ENCODE measurements at regions of chr6 and their contacts with region 1.

Region 1: GRCh38 chr6:75208298-75209183 is 2.7 kb upstream of the COL12A1 start:
- DNase-seq: peak; percentile 91
- H3K4me3 ChIP-seq: peak overlapping the region; percentile 16
- H3K27ac ChIP-seq: no peak overlapping the region
- H3K4me1 ChIP-seq: peaks cover 38% of the 10 kb centered on the region
- H3K27me3 ChIP-seq: peaks cover 22% of the 10 kb centered on the region
- CTCF ChIP-seq: peak; percentile 95

Region 2: DNA sequence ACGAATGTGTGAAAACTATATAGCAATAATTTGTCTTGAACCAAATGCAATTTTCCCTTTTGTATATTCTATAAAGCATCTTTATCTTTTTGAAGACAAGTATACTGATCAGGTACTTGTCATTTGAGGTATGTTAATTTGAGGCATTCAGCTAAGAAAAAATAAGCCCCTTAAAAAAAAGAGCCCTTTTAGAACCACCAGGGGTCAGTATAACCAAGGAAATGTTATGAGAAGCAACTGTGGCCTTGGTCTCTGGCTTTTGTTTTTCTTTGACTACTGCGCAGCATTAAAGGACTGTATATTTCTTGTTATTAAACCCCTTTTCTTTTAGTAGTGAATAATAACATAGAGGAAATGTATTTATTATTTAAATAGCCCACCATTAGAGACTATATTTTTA is 1469.4 kb before region 1 on chr6:
- CTCF ChIA-PET with region 1: interaction called, 14 read pairs
- POLR2A ChIA-PET with region 1: no interaction called
- intact Hi-C with region 1: loop called (anchors 1 kb)
- DNase-seq: peak; percentile 83
- H3K4me3 ChIP-seq: no peak overlapping the region
- H3K27ac ChIP-seq: no peak overlapping the region
- H3K4me1 ChIP-seq: no peaks in the 10 kb centered on the region
- H3K27me3 ChIP-seq: no peaks in the 10 kb centered on the region
- CTCF ChIP-seq: peak; percentile 82

Region 3: DNA sequence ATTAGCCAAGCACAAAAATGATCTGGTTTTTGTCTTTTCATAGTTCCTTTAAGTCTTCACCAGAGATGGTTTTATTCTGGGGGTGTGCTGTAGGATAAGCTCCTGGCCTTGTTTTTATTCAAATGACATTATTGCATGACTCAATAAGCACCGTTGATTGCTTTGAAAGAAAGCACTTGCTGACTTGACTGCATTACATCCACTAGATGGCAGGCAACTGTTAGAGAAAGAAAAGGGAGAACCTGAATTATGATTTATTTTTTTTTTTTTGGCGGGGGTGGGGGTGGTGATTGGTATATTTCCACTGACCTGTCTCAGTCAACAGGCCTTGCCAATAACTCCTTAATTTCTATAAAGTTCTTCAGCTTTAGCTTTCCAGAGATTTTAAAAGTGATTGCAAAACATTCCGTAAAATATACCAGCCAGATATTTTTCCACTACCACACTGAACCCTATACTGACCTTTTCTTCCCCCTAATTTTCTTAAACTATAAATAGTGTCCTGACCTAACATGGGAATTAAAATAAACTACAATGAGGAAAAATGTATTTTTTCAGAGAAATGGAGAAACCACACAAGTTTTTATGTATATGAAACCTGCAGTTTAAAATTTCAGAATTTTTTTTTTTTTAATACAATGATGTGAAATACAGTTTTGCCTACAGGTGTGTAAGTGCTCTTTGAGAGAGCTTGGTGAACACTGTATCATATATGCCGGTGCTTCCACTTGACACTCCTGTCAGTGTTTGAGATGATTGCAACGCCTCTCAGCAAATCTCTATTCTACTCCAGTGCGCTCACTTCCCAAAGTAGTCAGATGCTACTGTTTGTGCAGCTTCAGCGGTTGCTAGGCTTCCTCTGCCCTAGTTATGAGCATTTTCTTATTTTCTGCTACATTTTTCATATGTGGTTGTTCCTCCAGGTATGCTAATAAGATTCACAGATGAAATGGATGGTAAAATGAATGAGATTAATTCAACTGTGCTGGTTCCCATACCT is 1238.3 kb before region 1 on chr6:
- CTCF ChIA-PET with region 1: interaction called, 4 read pairs
- POLR2A ChIA-PET with region 1: no interaction called
- intact Hi-C with region 1: loop called (anchors 2 kb)
- DNase-seq: peak; percentile 76
- H3K4me3 ChIP-seq: no peak overlapping the region
- H3K27ac ChIP-seq: peak overlapping the region; percentile 33
- H3K4me1 ChIP-seq: peaks cover 33% of the 10 kb centered on the region
- H3K27me3 ChIP-seq: no peaks in the 10 kb centered on the region
- CTCF ChIP-seq: peak; percentile 83

Region 4: DNA sequence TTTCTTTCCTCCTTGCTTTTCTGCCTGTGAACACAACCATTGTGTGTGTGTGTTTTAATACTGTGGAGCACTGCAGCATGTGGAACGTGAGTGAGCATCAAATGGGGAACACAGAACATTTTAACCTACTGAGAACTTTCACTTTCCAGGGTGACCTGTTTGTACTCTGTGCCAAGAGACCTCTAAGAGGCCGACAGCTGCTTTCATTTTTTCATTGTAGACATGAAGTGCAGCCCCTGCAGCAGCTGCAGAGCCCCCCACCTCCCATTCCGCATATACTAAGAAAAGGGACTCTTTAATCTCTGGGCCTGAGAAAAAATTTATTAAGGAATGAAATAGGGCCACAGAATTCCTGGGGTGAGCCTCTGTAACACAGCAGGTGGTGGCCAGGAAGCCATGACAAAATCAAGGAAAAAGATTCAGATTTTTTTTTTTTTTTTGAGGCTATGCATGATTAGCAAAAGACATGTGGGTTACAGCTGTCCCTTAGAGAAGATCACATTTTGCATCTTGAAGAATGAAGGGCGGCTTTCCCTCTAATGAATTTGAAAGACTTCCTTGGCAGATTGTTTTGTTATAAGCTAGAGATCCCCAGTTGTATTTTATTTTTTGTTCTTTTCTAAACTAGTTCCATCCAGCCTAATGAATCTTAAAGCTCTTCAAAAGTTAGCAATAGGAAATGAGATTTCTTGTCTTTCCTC is 1009.2 kb before region 1 on chr6:
- CTCF ChIA-PET with region 1: no interaction called
- POLR2A ChIA-PET with region 1: no interaction called
- intact Hi-C with region 1: loop called (anchors 5 kb)
- DNase-seq: no peak
- H3K4me3 ChIP-seq: no peak overlapping the region
- H3K27ac ChIP-seq: no peak overlapping the region
- H3K4me1 ChIP-seq: peaks cover 4% of the 10 kb centered on the region
- H3K27me3 ChIP-seq: no peaks in the 10 kb centered on the region
- CTCF ChIP-seq: no peak

Region 5: GRCh38 chr6:74574794-74575193 is 633.7 kb before region 1 on chr6:
- CTCF ChIA-PET with region 1: no interaction called
- POLR2A ChIA-PET with region 1: no interaction called
- intact Hi-C with region 1: loop called (anchors 10 kb)
- DNase-seq: peak; percentile 65
- H3K4me3 ChIP-seq: no peak overlapping the region
- H3K27ac ChIP-seq: no peak overlapping the region
- H3K4me1 ChIP-seq: peaks cover 18% of the 10 kb centered on the region
- H3K27me3 ChIP-seq: no peaks in the 10 kb centered on the region
- CTCF ChIP-seq: peak; percentile 74

Region 6: DNA sequence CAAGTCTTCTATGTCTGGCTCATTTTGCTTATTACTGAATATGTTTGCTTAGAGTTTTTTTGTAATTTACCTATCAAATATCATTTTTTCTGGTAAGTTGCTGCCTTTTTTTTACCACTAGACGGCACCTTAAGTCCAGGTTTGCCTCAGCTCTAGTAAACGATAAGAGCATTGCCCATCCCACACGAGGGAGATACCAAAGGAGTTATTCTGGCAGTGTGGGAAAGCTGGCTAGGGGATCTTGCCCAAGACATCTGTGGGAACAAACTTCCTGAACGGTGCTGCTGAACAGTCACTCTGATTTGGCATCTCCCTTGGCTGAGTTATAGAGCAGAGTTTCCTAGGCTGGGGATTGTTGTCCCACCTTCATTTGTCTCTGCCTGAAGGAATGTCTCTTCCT is 309.1 kb before region 1 on chr6:
- CTCF ChIA-PET with region 1: interaction called, 6 read pairs
- POLR2A ChIA-PET with region 1: no interaction called
- intact Hi-C with region 1: loop called (anchors 1 kb)
- DNase-seq: peak; percentile 28
- H3K4me3 ChIP-seq: no peak overlapping the region
- H3K27ac ChIP-seq: no peak overlapping the region
- H3K4me1 ChIP-seq: no peaks in the 10 kb centered on the region
- H3K27me3 ChIP-seq: no peaks in the 10 kb centered on the region
- CTCF ChIP-seq: peak; percentile 37; the same call in 1 of the 2 replicates

Region 7: GRCh38 chr6:75116946-75117345 is 91.6 kb before region 1 on chr6:
- CTCF ChIA-PET with region 1: no interaction called
- POLR2A ChIA-PET with region 1: no interaction called
- intact Hi-C with region 1: no loop called
- DNase-seq: no peak
- H3K4me3 ChIP-seq: no peak overlapping the region
- H3K27ac ChIP-seq: no peak overlapping the region
- H3K4me1 ChIP-seq: no peaks in the 10 kb centered on the region
- H3K27me3 ChIP-seq: no peaks in the 10 kb centered on the region
- CTCF ChIP-seq: no peak

Region 8: DNA sequence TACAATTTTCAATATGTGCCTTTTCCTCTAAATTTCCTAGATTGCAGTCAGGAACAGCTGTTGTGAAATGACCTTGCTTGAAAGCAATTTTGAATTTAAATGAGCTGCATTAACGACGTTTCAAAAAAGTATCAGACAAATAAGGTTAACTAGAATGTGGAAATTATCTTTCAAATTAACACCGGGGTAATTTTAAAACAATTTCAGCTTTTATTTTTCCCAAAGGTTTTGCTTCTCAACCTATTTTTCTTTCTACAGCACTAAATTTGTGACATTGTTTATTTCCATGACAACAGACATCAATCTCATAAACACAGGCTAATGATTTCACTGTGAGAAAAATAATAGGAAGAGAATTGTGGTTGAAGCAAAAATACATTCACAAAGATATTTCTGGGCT is 41.2 kb before region 1 on chr6:
- CTCF ChIA-PET with region 1: no interaction called
- POLR2A ChIA-PET with region 1: no interaction called
- intact Hi-C with region 1: no loop called
- DNase-seq: no peak
- H3K4me3 ChIP-seq: no peak overlapping the region
- H3K27ac ChIP-seq: no peak overlapping the region
- H3K4me1 ChIP-seq: no peaks in the 10 kb centered on the region
- H3K27me3 ChIP-seq: no peaks in the 10 kb centered on the region
- CTCF ChIP-seq: no peak